Transverse colon (tissue), 4 donors: ENCODE measurements at regions of chr5 and their contacts with region 1.

Region 1: GRCh38 chr5:103139264-103139865 is 19.3 kb downstream of the PPIP5K2 start:
- DNase-seq: peak; percentile 82
- H3K4me3 ChIP-seq: no peak overlapping the region
- H3K27ac ChIP-seq: peak overlapping the region in 1 of 4 donors; percentile 53
- H3K4me1 ChIP-seq: peaks cover 0 to 8% (median 3%) of the 10 kb centered on the region in 4 donors
- H3K27me3 ChIP-seq: no peaks in the 10 kb centered on the region
- CTCF ChIP-seq: peak; percentile 90 to 93 (median 91)
- EP300 ChIP-seq: no peak
- POLR2A ChIP-seq: no peak

Region 2: DNA sequence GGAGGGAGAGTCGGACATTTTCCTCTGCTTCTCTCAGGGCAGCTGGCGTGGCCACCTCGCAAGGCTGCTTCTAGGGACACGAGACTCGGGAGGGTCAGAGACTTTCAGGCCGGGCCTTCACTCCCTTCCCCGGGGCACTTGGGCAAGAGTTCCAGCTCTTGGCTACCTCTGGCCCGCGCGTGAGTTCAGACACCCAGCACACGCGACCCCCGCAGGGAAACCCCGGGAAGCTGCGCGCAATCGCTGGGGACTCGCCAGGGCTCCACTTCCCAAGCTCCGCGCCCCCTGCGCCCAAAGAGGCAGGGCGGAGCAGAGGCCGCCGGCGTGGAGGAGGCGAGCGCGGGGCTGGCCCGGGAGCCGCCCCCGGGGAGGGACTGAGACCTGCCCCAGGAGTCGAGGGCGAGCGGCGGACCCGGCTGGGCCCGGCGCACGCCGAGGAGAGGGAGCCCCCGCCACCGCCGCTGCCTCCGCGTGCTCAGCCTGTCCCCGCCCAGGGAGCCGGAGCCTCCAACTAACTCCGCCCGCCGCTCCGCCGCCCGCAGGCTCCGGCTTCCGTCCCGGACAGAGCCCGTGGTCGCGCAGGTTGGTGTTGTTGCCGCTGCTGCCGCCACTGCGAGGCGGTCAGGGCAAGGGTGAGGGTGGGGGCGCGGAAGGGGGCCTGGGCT is 384.5 kb before region 1 on chr5 and contains the start of gene PAM:
- in situ Hi-C with region 1: loop called in 1 of 4 experiments (anchors 25 kb)
- intact Hi-C with region 1: no loop called
- DNase-seq: peak; percentile 80
- H3K4me3 ChIP-seq: peak within 1 kb of the TSS; percentile 61 to 82 (median 68)
- H3K27ac ChIP-seq: peak within 1 kb of the TSS; percentile 69 to 77 (median 76)
- H3K4me1 ChIP-seq: peaks cover 4 to 27% (median 16%) of the 10 kb centered on the region in 4 donors
- H3K27me3 ChIP-seq: peaks cover 9% of the 10 kb centered on the region
- CTCF ChIP-seq: no peak
- EP300 ChIP-seq: no peak
- POLR2A ChIP-seq: peak; percentile 38
- total RNA-seq, gene PAM: 73.0 to 181 (median 138) TPM

Region 3: DNA sequence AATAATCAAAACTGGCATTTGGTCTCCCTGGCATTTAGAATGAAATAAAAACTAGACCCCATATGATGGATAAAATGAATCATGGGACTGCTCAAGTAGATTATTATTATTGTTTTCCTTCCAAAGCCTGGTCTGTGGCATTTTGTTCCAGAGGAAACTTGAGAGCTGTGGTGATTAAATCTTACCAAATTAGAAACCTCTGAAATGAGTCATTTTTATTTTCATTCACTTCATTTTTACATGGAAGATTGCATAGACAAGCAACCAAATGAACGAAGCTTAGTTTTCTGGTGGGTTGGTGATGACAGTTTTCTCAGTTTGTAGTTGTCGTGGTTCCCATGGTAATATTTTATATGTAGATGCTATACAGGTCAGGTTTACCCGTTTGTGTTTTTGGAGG is 360.9 kb before region 1 on chr5:
- in situ Hi-C with region 1: loop called in 3 of 4 experiments (anchors 10 to 25 kb)
- intact Hi-C with region 1: no loop called
- DNase-seq: no peak
- H3K4me3 ChIP-seq: no peak overlapping the region
- H3K27ac ChIP-seq: no peak overlapping the region
- H3K4me1 ChIP-seq: peaks cover 0 to 18% (median 8%) of the 10 kb centered on the region in 4 donors
- H3K27me3 ChIP-seq: no peaks in the 10 kb centered on the region
- CTCF ChIP-seq: no peak
- EP300 ChIP-seq: no peak
- POLR2A ChIP-seq: no peak

Region 4: GRCh38 chr5:104126980-104127379 is 987.6 kb after region 1 on chr5:
- in situ Hi-C with region 1: no loop called
- intact Hi-C with region 1: no loop called
- DNase-seq: no peak
- H3K4me3 ChIP-seq: no peak overlapping the region
- H3K27ac ChIP-seq: no peak overlapping the region
- H3K4me1 ChIP-seq: no peaks in the 10 kb centered on the region
- H3K27me3 ChIP-seq: no peaks in the 10 kb centered on the region
- CTCF ChIP-seq: no peak
- EP300 ChIP-seq: no peak
- POLR2A ChIP-seq: no peak